Activated T-helper 2 cell treated with anti-CD3 and anti-CD28 coated beads, Interferon-gamma antibody, Interleukin-2, Interleukin-4, amounts not matched to agents 10 μg/mL and 5 μg/mL and 100 μg/mL, durations not matched to agents 14 hours and 24 hours and 36 hours (primary cell): ENCODE measurements at regions of chr7 and their contacts with region 1.

Region 1: GRCh38 chr7:20330240-20330927 is at the start of gene ITGB8:
- DNase-seq: peak; percentile 23
- H3K4me3 Mint-ChIP-seq: peak within 1 kb of the TSS; percentile 77
- H3K27ac Mint-ChIP-seq: peak within 1 kb of the TSS; percentile 28
- H3K4me1 Mint-ChIP-seq: peaks cover 20% of the 10 kb centered on the region
- H3K27me3 Mint-ChIP-seq: peaks cover 63% of the 10 kb centered on the region
- total RNA-seq, gene ITGB8: 0.05 TPM in 1 of 2 replicates, not detected in the other

Region 2: GRCh38 chr7:19725770-19726169 is 604.6 kb before region 1 on chr7:
- intact Hi-C with region 1: no loop called
- DNase-seq: no peak
- H3K4me3 Mint-ChIP-seq: no peak overlapping the region
- H3K27ac Mint-ChIP-seq: no peak overlapping the region
- H3K4me1 Mint-ChIP-seq: no peaks in the 10 kb centered on the region
- H3K27me3 Mint-ChIP-seq: peaks cover 2% of the 10 kb centered on the region

Region 3: DNA sequence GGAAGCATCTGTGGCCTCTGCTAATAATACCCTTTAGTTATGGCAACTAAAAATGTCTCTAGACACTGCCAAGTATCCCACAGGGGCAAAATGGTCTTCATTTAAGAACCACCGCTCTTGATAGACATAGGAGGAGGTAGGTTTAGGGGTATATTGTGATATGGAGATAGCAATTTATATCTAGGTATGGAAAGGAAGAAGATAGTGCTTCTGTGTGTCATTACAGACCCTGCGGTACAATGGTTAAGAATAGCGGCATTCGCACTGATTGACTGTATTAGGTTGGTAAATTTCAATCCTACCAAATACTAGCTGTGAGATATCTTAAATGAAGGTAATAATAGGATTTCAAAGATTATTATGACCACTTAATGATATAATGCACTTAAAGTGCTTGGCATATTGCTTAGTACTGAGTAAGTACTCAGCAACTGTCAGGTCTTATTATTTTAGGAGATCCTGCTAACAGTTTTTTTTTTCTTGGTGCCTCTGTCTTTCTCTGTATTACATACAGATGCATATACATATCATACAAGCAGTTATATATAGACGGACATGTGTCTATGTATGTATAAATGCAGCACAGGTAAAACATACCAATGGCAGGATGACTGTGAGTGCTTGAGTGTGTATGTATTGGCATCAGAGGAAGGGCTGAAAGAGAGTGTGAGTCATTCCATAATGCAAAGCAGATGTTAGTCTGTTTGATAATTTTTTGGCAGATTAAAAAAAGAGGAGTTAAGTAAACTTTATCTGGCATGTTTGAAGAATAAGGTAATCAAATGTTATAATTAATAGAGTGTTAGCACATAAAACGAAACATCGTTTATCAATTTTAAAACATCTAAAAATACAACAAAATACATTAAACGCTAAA is 49.7 kb before region 1 on chr7:
- intact Hi-C with region 1: loop called (anchors 5 kb)
- DNase-seq: no peak
- H3K4me3 Mint-ChIP-seq: no peak overlapping the region
- H3K27ac Mint-ChIP-seq: no peak overlapping the region
- H3K4me1 Mint-ChIP-seq: no peaks in the 10 kb centered on the region
- H3K27me3 Mint-ChIP-seq: no peaks in the 10 kb centered on the region

Region 4: DNA sequence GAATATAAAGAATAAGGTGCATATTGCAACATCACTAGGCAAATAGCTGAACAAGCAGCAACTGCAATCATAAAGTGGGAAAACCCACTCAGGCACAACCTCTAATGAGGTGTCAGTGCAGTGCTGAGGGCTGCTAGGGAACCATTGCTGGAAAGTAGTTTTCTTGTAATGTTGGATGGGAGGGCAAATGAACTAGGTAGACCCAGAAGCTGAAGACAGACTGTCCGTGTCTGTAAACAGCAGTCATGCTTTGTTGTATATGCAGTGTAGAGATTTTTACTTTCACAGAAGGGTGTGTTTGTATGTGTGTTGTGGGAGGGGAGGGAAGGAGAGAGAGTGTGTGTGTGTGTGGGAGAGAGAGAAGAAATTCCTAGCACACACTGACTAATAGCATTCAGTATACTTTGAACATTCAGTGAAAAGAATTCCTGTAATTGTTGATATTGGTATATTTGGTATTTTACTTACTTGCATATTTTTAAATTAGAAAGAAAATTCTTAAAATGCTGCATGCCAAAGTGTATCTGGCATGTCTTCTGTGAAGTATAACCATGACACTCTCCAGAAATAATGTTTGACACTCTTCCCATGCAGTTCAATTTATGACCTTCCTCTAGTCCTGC is 29.1 kb after region 1 on chr7:
- intact Hi-C with region 1: no loop called
- DNase-seq: no peak
- H3K4me3 Mint-ChIP-seq: no peak overlapping the region
- H3K27ac Mint-ChIP-seq: no peak overlapping the region
- H3K4me1 Mint-ChIP-seq: no peaks in the 10 kb centered on the region
- H3K27me3 Mint-ChIP-seq: no peaks in the 10 kb centered on the region